ENCODE measurements at regions of chr10 and their contacts with region 1.

Region 1: DNA sequence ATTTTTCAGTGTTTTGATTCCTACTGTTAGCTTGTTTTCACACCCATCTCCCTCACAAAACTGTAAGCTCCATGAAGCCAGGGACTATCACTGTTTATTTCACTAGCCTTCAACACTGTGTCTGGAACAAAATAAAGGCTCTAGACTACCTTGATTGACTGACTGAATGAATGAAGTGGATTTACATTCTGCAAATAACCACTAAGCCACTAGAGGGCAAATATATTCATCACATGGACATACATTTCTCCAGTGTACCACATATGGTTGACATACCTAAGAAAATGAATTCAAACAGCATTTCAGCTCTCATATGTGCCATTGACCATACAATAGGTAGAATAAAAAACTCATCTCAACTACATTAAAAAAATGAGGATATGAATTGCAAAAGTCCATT is 185.9 kb downstream of the RAB11FIP2 start:
- DNase-seq: no peak
- H3K4me3 ChIP-seq: no peak overlapping the region
- H3K27ac ChIP-seq: no peak overlapping the region
- H3K4me1 ChIP-seq: no peaks in the 10 kb centered on the region
- H3K27me3 ChIP-seq: no peaks in the 10 kb centered on the region
- CTCF ChIP-seq: peak; percentile 41 to 56

Region 2: DNA sequence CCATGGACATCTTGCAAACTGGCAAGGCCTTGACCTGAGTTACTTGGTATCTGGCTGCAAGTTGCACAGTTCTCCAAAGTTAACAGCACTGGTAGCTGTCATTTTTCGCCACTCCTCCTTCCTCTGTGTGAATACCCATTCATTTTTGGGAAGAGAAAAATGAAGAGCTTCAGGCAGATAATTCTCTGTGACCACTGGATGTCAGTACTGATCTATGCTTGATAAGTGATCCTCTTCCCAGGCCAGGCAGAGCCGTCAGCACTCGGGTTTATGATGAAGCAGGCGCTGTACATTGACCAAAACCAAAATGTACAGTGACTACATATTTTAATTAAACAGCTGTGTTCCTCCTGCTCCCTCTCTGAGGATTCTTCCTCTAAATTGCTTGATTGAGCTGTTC is 429.7 kb before region 1 on chr10:
- CTCF ChIA-PET with region 1: no interaction called
- dilution Hi-C with region 1: no loop called
- in situ Hi-C with region 1: no loop called
- intact Hi-C with region 1: loop called (anchors 2 kb)
- DNase-seq: peak; percentile 60
- H3K4me3 ChIP-seq: no peak overlapping the region
- H3K27ac ChIP-seq: no peak overlapping the region
- H3K4me1 ChIP-seq: no peaks in the 10 kb centered on the region
- H3K27me3 ChIP-seq: no peaks in the 10 kb centered on the region
- CTCF ChIP-seq: peak; percentile 39 to 57

Region 3: GRCh38 chr10:118106426-118106825 is 245.6 kb after region 1 on chr10:
- CTCF ChIA-PET with region 1: no interaction called
- dilution Hi-C with region 1: no loop called
- in situ Hi-C with region 1: no loop called
- intact Hi-C with region 1: loop called (anchors 5 kb)
- DNase-seq: peak; percentile 1
- H3K4me3 ChIP-seq: no peak overlapping the region
- H3K27ac ChIP-seq: no peak overlapping the region
- H3K4me1 ChIP-seq: peaks cover 11% of the 10 kb centered on the region
- H3K27me3 ChIP-seq: no peaks in the 10 kb centered on the region
- CTCF ChIP-seq: peak in 1 of 2 donors; percentile 40

Measured in mammary epithelial cell (primary cell).